PC-9 (cell line): ENCODE measurements at regions of chr2 and their contacts with region 1.

Region 1: GRCh38 chr2:120539937-120540718 is 194.2 kb downstream of the INHBB start:
- DNase-seq: peak; percentile 86 to 95
- H3K4me3 ChIP-seq: peak overlapping the region; percentile 11; the same call in 1 of the 2 replicates
- H3K27ac ChIP-seq: peak overlapping the region; percentile 83
- H3K4me1 ChIP-seq: peaks cover 44% of the 10 kb centered on the region
- H3K27me3 ChIP-seq: no peaks in the 10 kb centered on the region
- CTCF ChIP-seq: no peak

Region 2: GRCh38 chr2:120476141-120476540 is 64.0 kb before region 1 on chr2:
- CTCF ChIA-PET with region 1: no interaction called
- POLR2A ChIA-PET with region 1: no interaction called
- intact Hi-C with region 1: loop called (anchors 2 kb)
- DNase-seq: peak; percentile 78 to 95
- H3K4me3 ChIP-seq: no peak overlapping the region
- H3K27ac ChIP-seq: peak overlapping the region; percentile 62
- H3K4me1 ChIP-seq: peaks cover 32% of the 10 kb centered on the region
- H3K27me3 ChIP-seq: no peaks in the 10 kb centered on the region
- CTCF ChIP-seq: no peak

Region 3: GRCh38 chr2:120503793-120504571 is 36.1 kb before region 1 on chr2:
- CTCF ChIA-PET with region 1: no interaction called
- POLR2A ChIA-PET with region 1: no interaction called
- intact Hi-C with region 1: no loop called
- DNase-seq: peak in 1 of 2 experiments; percentile 43
- H3K4me3 ChIP-seq: no peak overlapping the region
- H3K27ac ChIP-seq: no peak overlapping the region
- H3K4me1 ChIP-seq: peaks cover 18% of the 10 kb centered on the region
- H3K27me3 ChIP-seq: no peaks in the 10 kb centered on the region
- CTCF ChIP-seq: no peak

Region 4: DNA sequence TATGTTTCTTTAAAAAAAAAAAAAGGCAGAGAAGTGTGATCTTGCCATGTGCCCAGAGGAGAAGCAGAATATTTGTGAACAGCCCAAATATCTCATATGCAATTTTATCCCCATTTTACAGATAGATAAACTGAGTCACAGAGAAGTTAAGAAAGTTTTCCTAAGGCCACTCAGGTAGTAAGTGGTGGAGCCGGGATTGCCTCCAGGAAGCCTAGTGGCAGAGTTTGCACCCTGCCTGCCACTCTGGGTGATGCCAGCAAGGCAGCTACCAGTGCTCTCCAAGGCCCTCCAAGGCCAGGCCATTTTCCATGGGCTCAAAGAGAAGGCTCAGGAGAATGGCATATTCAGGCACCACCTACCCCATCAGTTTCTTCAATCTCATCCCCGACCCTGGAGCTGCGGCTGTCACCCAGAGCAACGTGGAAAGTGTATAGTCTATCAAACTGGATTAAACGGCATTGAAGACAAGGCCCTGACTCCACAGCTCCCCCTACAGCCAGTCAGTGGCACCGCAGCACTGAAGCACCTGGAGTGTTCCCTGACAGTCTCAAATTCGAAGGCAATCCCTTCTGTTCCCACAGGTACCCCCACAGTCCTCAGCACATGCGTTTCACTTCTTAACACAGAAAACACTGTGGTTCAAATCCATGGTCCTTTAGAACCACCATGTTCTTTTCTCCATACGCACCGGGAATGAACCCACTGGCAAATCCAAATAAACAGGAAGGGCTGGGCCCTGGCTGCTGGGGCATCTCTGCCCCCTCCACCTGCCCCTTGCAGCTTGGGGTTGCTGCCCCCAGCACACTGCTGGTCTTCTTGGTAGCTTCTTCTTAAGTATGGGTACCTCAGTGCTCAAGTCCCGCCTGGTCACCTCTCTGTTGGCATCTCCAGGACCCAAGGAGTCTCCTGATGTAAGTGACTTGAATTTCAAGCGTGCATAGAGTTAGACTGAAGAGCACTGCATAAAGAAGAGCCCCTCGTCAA is 18.9 kb before region 1 on chr2:
- CTCF ChIA-PET with region 1: no interaction called
- POLR2A ChIA-PET with region 1: no interaction called
- intact Hi-C with region 1: loop called (anchors 1 kb)
- DNase-seq: peak; percentile 59 to 74
- H3K4me3 ChIP-seq: no peak overlapping the region
- H3K27ac ChIP-seq: no peak overlapping the region
- H3K4me1 ChIP-seq: peaks cover 15% of the 10 kb centered on the region
- H3K27me3 ChIP-seq: no peaks in the 10 kb centered on the region
- CTCF ChIP-seq: peak; percentile 99

Region 5: DNA sequence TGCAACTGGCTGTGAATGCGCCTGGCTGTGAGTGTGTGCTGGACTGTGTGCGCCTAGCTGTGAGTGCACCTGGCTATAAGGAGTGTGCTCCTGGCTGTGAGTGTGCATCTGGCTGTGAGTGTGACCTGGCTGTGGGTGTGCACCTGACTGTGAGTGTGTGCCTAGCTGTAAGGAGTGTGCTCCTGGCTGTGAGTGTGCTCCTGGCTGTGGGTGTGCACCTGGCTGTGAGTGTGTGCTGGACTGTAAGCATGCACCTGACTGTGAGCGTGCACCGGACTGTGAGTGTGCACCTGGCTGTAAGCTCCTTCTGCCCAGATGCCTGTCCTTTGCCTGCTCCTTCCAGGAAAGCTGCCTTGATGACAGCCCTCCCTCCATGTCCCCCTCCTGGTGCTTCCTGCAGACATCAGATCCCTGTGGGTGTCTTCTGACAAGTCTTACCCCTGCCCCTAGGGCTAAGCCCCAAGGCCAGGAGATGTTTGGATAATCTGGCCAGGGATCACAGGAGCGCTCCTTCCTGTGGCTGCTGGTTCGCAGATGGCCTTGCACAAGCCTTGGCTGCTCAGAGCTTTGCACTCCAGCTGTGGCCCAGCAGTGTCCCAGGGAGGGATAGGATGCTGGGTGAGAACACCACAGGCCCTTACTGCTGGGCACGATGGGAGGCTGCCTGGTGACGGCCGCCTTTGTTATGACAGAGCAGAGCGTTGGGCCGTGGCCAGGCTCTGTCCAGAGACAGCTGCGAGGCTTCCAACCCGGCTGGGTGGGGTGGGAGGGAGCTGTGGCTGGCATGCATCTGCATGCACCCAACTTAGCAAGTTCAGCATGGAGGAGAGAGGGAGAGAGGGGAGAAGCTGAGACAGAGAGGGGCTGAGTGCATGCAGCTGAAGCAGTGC is 285.5 kb after region 1 on chr2:
- CTCF ChIA-PET with region 1: no interaction called
- POLR2A ChIA-PET with region 1: no interaction called
- intact Hi-C with region 1: no loop called
- DNase-seq: no peak
- H3K4me3 ChIP-seq: no peak overlapping the region
- H3K27ac ChIP-seq: no peak overlapping the region
- H3K4me1 ChIP-seq: no peaks in the 10 kb centered on the region
- H3K27me3 ChIP-seq: peaks cover 46% of the 10 kb centered on the region
- CTCF ChIP-seq: no peak

Region 6: GRCh38 chr2:120856421-120856862 is 316.3 kb after region 1 on chr2:
- CTCF ChIA-PET with region 1: no interaction called
- POLR2A ChIA-PET with region 1: interaction called, 13 read pairs
- intact Hi-C with region 1: no loop called
- DNase-seq: peak in 1 of 2 experiments; percentile 12
- H3K4me3 ChIP-seq: no peak overlapping the region
- H3K27ac ChIP-seq: no peak overlapping the region
- H3K4me1 ChIP-seq: no peaks in the 10 kb centered on the region
- H3K27me3 ChIP-seq: no peaks in the 10 kb centered on the region; the same call in 1 of the 2 replicates
- CTCF ChIP-seq: no peak